ENCODE measurements at regions of chr5 and their contacts with region 1.

Region 1: DNA sequence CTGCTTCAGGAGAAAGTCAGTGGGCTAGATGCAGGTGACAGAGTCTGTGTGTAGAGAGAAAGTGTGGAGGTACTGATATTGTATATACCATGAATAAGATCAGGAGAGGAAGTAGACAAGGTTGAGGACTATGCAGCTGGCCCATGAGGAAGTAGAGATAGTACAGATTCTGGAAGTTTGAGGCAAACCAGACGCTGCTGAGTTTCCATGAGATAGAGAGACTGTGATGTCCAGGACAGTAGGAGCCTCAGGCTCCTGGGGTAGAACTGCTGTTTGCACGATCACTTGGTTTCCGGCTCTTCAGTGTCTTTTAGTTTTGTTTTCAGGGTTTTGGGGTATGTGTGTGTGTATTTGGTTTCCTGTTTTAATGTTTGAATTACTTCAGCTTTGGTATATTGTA is 13.6 kb downstream of the OTULINL start:
- DNase-seq: peak; percentile 75
- H3K4me3 Mint-ChIP-seq: peak overlapping the region; percentile 69
- H3K27ac Mint-ChIP-seq: peak overlapping the region; percentile 99
- H3K4me1 Mint-ChIP-seq: peaks cover 89% of the 10 kb centered on the region
- H3K27me3 Mint-ChIP-seq: no peaks in the 10 kb centered on the region

Region 2: GRCh38 chr5:14581333-14581890 is 13.8 kb before region 1 on chr5 and contains the start of gene OTULINL:
- CTCF ChIA-PET with region 1: interaction called, 17 read pairs
- POLR2A ChIA-PET with region 1: interaction called, 6 read pairs
- DNase-seq: peak; percentile 85
- H3K4me3 Mint-ChIP-seq: peak within 1 kb of the TSS; percentile 84
- H3K27ac Mint-ChIP-seq: peak within 1 kb of the TSS; percentile 90
- H3K4me1 Mint-ChIP-seq: peaks cover 35% of the 10 kb centered on the region
- H3K27me3 Mint-ChIP-seq: peaks cover 22% of the 10 kb centered on the region
- total RNA-seq, gene OTULINL: 31.4 to 38.7 TPM